ENCODE measurements at regions of chr1 and their contacts with region 1.

Region 1: GRCh38 chr1:109620841-109621286 is 1.2 kb downstream of the AMPD2 start:
- DNase-seq: peak; percentile 99
- H3K4me3 Mint-ChIP-seq: peak overlapping the region; percentile 96
- H3K27ac Mint-ChIP-seq: peak overlapping the region; percentile 95
- H3K4me1 Mint-ChIP-seq: peaks cover 64% of the 10 kb centered on the region
- H3K27me3 Mint-ChIP-seq: no peaks in the 10 kb centered on the region

Region 2: GRCh38 chr1:109282952-109283747 is 337.7 kb before region 1 on chr1 and contains the start of gene PSRC1:
- intact Hi-C with region 1: loop called (anchors 5 kb)
- DNase-seq: peak; percentile 98
- H3K4me3 Mint-ChIP-seq: peak within 1 kb of the TSS; percentile 95
- H3K27ac Mint-ChIP-seq: peak within 1 kb of the TSS; percentile 95
- H3K4me1 Mint-ChIP-seq: peaks cover 19% of the 10 kb centered on the region
- H3K27me3 Mint-ChIP-seq: peaks cover 2% of the 10 kb centered on the region
- total RNA-seq, gene PSRC1: 4.5 and 5.0 TPM in 2 replicates

Region 3: DNA sequence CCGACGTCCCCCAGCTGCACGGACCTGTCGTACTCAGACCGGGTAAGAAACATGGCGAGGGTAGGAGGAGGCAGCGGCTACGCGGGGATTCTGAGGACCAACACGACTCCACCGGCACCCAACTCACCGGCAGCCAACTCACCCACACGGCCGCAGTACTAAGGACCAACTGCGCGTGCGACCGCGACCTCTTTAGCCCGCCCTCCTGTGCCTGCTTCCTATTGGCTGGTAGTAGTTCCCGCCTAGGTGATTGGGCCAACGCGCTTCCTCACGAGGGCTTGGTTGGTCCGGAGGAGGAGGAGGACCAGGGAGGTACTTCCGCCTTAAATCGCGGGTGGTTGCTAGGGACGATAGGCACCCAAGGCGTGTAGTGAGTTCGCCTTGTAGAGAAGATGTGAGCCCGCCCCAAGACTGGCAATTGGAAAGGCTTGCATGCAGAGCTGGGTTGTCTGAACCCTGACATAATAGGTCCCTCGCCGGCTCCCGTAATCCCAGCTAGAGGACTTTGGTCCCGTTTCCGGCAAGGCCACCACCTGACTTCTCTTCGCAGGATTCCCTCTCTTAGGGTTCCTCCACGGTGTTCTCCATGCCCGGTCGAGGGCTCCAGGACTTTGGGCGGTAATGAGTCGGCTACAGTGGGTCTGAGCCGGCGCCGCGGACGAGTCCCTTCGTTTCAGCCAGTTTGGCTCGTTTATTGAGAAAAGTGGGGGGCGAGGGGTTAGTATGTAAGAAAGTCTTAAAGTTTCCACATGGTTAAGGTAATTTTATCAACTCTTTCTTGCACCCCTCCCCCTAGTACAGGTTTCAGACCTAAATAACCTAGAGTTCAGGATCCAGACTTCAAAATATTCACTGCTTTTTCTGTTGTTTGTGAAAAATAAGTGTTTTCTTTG is 194.3 kb before region 1 on chr1 and contains the start of gene PSMA5:
- intact Hi-C with region 1: loop called (anchors 5 kb)
- DNase-seq: peak; percentile 98
- H3K4me3 Mint-ChIP-seq: peak within 1 kb of the TSS; percentile 94
- H3K27ac Mint-ChIP-seq: peak within 1 kb of the TSS; percentile 97
- H3K4me1 Mint-ChIP-seq: peaks cover 27% of the 10 kb centered on the region
- H3K27me3 Mint-ChIP-seq: peaks cover 2% of the 10 kb centered on the region
- total RNA-seq, gene PSMA5: 262 and 270 TPM in 2 replicates

Region 4: GRCh38 chr1:109493805-109494539 is 126.9 kb before region 1 on chr1 and contains the start of gene CYB561D1:
- intact Hi-C with region 1: loop called (anchors 5 kb)
- DNase-seq: peak; percentile 97
- H3K4me3 Mint-ChIP-seq: peak within 1 kb of the TSS; percentile 93
- H3K27ac Mint-ChIP-seq: peak within 1 kb of the TSS; percentile 70
- H3K4me1 Mint-ChIP-seq: peaks cover 36% of the 10 kb centered on the region
- H3K27me3 Mint-ChIP-seq: no peaks in the 10 kb centered on the region
- total RNA-seq, gene CYB561D1: 11.3 and 13.1 TPM in 2 replicates

Region 5: GRCh38 chr1:109598655-109599054 is 22.2 kb before region 1 on chr1:
- intact Hi-C with region 1: no loop called
- DNase-seq: no peak
- H3K4me3 Mint-ChIP-seq: no peak overlapping the region
- H3K27ac Mint-ChIP-seq: no peak overlapping the region
- H3K4me1 Mint-ChIP-seq: peaks cover 7% of the 10 kb centered on the region
- H3K27me3 Mint-ChIP-seq: no peaks in the 10 kb centered on the region

Region 6: DNA sequence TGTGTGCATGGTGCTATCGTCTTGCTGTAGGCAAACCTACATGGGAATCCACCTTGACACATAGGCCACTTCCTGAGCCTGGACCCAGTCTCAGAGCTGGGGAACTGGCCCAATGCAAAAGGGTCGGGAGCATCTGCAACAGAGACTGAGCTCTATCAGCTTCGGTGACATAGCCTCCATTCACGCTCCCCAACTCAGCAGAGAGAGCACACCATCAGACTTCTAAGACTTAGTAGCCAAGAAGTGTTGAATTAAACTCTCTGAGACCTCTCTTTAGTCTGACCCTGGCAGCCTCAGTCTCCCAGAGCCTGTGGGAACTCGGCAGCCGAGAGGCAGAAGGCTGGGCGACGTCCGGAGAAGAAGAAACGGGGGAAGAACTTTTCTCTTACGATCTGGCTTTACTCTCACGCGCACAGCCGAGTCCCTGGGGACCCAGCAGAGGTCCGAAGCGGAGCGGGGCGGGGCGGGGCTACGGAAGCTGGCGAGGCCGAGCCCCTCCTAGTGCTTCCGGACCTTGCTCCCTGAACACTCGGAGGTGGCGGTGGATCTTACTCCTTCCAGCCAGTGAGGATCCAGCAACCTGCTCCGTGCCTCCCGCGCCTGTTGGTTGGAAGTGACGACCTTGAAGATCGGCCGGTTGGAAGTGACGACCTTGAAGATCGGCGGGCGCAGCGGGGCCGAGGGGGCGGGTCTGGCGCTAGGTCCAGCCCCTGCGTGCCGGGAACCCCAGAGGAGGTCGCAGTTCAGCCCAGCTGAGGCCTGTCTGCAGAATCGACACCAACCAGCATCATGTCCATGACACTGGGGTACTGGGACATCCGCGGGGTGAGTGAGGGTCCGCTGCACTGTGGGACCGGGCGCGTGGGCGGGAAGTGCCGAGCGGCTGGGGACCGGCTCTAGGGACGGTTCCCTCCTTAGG is 35.0 kb after region 1 on chr1 and contains the start of gene GSTM4:
- intact Hi-C with region 1: no loop called
- DNase-seq: peak; percentile 92
- H3K4me3 Mint-ChIP-seq: peak within 1 kb of the TSS; percentile 96
- H3K27ac Mint-ChIP-seq: peak within 1 kb of the TSS; percentile 89
- H3K4me1 Mint-ChIP-seq: peaks cover 19% of the 10 kb centered on the region
- H3K27me3 Mint-ChIP-seq: peaks cover 28% of the 10 kb centered on the region
- total RNA-seq, gene GSTM4: 6.8 and 9.9 TPM in 2 replicates

Region 7: DNA sequence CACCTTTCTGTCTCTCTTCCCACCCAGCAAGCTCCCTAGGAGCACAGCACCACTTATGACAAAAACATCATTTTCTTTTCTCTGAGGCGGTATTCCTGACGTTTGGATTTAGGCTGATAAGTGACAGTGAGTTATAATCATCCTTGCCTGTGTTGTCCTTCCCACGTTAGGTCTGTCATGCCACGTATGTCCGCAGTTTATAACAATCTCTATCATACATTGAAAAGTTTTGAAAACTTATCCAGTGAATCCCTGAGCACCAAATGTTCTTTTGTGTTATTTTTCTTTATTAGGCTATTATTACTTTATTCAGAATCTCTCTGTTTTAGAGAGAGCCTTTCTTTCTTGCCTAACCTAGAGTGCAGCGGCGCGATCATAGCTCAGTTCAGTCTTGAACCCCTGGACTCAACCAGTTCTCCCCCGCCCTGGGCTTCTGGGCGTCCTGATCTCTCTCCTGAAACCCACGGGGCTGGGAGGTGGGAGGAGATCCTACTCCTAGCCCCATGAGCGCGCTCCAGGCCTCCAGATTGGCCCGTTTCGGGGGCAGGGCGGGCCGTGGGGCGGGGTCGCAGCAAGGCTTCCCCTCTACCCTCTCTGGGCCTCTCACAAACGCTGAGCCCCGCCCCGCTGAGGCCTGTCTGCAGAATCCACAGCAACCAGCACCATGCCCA is 46.7 kb after region 1 on chr1 and contains the start of gene GSTM2:
- intact Hi-C with region 1: loop called (anchors 5 kb)
- DNase-seq: peak; percentile 96
- H3K4me3 Mint-ChIP-seq: peak within 1 kb of the TSS; percentile 73
- H3K27ac Mint-ChIP-seq: peak within 1 kb of the TSS; percentile 52
- H3K4me1 Mint-ChIP-seq: peaks cover 24% of the 10 kb centered on the region
- H3K27me3 Mint-ChIP-seq: no peaks in the 10 kb centered on the region
- total RNA-seq, gene GSTM2: 17.5 and 18.4 TPM in 2 replicates

Region 8: DNA sequence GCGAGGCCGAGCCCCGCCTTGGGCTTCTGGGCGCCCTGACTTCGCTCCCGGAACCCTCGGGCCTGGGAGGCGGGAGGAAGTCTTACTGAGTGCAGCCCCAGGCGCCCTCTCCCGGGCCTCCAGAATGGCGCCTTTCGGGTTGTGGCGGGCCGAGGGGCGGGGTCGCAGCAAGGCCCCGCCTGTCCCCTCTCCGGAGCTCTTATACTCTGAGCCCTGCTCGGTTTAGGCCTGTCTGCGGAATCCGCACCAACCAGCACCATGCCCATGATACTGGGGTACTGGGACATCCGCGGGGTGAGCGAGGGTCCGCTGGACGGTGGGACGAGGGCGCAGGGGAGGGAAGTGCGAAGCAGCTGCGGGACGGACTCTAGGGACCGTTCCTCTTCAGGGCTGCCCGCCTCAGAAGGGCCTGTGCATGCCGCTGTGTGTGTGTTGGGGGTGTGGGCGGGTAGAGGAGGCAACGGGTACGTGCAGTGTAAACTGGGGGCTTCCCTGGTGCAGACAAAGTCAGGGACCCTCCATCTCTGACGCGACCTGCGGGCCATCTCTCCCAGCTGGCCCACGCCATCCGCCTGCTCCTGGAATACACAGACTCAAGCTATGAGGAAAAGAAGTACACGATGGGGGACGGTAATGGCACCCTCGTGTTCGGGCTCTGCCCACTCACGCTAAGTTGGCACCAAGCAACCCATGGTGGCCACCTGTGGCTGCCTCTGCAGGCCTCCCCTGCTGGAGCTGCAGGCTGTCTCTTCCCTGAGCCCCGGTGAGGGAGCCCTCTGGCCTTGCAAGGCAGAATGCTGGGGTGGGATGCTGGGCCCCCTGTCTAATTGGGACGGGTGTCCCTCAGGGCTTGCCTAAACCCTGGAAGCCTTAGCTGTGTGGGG is 67.0 kb after region 1 on chr1 and contains the start of gene GSTM1:
- intact Hi-C with region 1: loop called (anchors 5 kb)
- DNase-seq: peak; percentile 97
- H3K4me3 Mint-ChIP-seq: peak within 1 kb of the TSS; percentile 87
- H3K27ac Mint-ChIP-seq: peak within 1 kb of the TSS; percentile 94
- H3K4me1 Mint-ChIP-seq: peaks cover 22% of the 10 kb centered on the region
- H3K27me3 Mint-ChIP-seq: no peaks in the 10 kb centered on the region
- total RNA-seq, gene GSTM1: 92.2 and 94.2 TPM in 2 replicates

Measured in activated CD4-positive, alpha-beta T cell treated with anti-CD3 and anti-CD28 coated beads, Interleukin-2, amount 10 ng/mL, durations not matched to agents 24 days and 14 days (primary cell).